Natural killer cell (primary cell): ENCODE measurements at regions of chr1 and their contacts with region 1.

Region 1: GRCh38 chr1:155244368-155245162 is 10.7 kb downstream of the ENTREP3 start:
- DNase-seq: peak; percentile 88 to 96
- ATAC-seq: peak; percentile 92 to 97 (median 96)
- H3K4me3 ChIP-seq: peak overlapping the region; percentile 74
- H3K4me3 Mint-ChIP-seq: peak overlapping the region; percentile 90
- H3K27ac ChIP-seq: peak overlapping the region; percentile 78
- H3K27ac Mint-ChIP-seq: peak overlapping the region; percentile 94 to 95
- H3K4me1 ChIP-seq: peaks cover 44% of the 10 kb centered on the region
- H3K4me1 Mint-ChIP-seq: peaks cover 21 to 37% of the 10 kb centered on the region in 2 donors
- H3K27me3 ChIP-seq: no peaks in the 10 kb centered on the region
- H3K27me3 Mint-ChIP-seq: peaks cover 4 to 8% of the 10 kb centered on the region in 2 donors
- CTCF ChIP-seq: peak; percentile 20

Region 2: GRCh38 chr1:155193275-155193990 is 51.1 kb before region 1 on chr1:
- intact Hi-C with region 1: loop called (anchors 5 kb)
- DNase-seq: peak; percentile 75 to 80
- ATAC-seq: peak; percentile 46 to 81 (median 60)
- H3K4me3 ChIP-seq: peak overlapping the region; percentile 27
- H3K4me3 Mint-ChIP-seq: peak overlapping the region; percentile 90
- H3K27ac ChIP-seq: no peak overlapping the region
- H3K27ac Mint-ChIP-seq: peak overlapping the region; percentile 82 to 97
- H3K4me1 ChIP-seq: peaks cover 30% of the 10 kb centered on the region
- H3K4me1 Mint-ChIP-seq: peaks cover 15 to 33% of the 10 kb centered on the region in 2 donors
- H3K27me3 ChIP-seq: no peaks in the 10 kb centered on the region
- H3K27me3 Mint-ChIP-seq: peaks cover 0 to 16% of the 10 kb centered on the region in 2 donors
- CTCF ChIP-seq: peak; percentile 97

Region 3: GRCh38 chr1:155208541-155209311 is 35.8 kb before region 1 on chr1 and contains the start of gene MTX1:
- intact Hi-C with region 1: loop called (anchors 2 kb)
- DNase-seq: peak; percentile 88 to 93
- ATAC-seq: peak; percentile 80 to 94 (median 86)
- H3K4me3 ChIP-seq: peak within 1 kb of the TSS; percentile 81
- H3K4me3 Mint-ChIP-seq: peak within 1 kb of the TSS; percentile 94
- H3K27ac ChIP-seq: peak within 1 kb of the TSS; percentile 100
- H3K27ac Mint-ChIP-seq: peak within 1 kb of the TSS; percentile 92 to 96
- H3K4me1 ChIP-seq: peaks cover 26% of the 10 kb centered on the region
- H3K4me1 Mint-ChIP-seq: peaks cover 25 to 33% of the 10 kb centered on the region in 2 donors
- H3K27me3 ChIP-seq: no peaks in the 10 kb centered on the region
- H3K27me3 Mint-ChIP-seq: no peaks in the 10 kb centered on the region
- CTCF ChIP-seq: no peak
- total RNA-seq, gene MTX1: 22.3 to 28.5 (median 27.9) TPM